Activated CD4-positive, alpha-beta T cell treated with anti-CD3 and anti-CD28 coated beads for 36 hours (primary cell): ENCODE measurements at regions of chr4 and their contacts with region 1.

Region 1: GRCh38 chr4:101187841-101188240 is 159.5 kb downstream of the PPP3CA start:
- DNase-seq: no peak
- ATAC-seq: no peak
- H3K4me3 Mint-ChIP-seq: no peak overlapping the region
- H3K27ac Mint-ChIP-seq: no peak overlapping the region
- H3K4me1 Mint-ChIP-seq: peaks cover 8% of the 10 kb centered on the region
- H3K27me3 Mint-ChIP-seq: no peaks in the 10 kb centered on the region

Region 2: DNA sequence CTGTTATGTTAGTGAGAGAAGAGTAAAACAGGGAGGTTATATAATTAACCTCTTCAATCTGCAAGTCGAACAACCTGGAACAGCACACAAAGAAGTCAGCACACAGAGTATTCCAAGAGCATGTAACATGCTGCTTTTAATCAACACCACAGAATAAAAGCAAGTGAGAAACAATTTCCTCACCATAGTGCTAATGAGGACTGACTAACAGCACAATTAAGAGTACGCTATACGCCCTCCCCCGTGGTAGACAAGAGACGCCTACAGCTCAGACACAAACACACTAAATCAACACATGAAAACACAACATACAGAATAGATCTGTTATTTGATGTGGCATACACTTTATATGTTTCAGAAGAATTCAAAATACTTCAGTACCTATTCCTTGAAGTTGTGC is 56.5 kb after region 1 on chr4:
- CTCF ChIA-PET with region 1: no interaction called
- POLR2A ChIA-PET with region 1: no interaction called
- intact Hi-C with region 1: no loop called
- DNase-seq: no peak
- ATAC-seq: no peak
- H3K4me3 Mint-ChIP-seq: no peak overlapping the region
- H3K27ac Mint-ChIP-seq: no peak overlapping the region
- H3K4me1 Mint-ChIP-seq: peaks cover 3% of the 10 kb centered on the region
- H3K27me3 Mint-ChIP-seq: no peaks in the 10 kb centered on the region

Region 3: GRCh38 chr4:101730291-101731117 is 542.7 kb after region 1 on chr4:
- CTCF ChIA-PET with region 1: interaction called, 5 read pairs
- POLR2A ChIA-PET with region 1: no interaction called
- intact Hi-C with region 1: loop called (anchors 5 kb)
- DNase-seq: peak; percentile 74
- ATAC-seq: peak; percentile 83
- H3K4me3 Mint-ChIP-seq: no peak overlapping the region
- H3K27ac Mint-ChIP-seq: no peak overlapping the region
- H3K4me1 Mint-ChIP-seq: no peaks in the 10 kb centered on the region
- H3K27me3 Mint-ChIP-seq: peaks cover 3% of the 10 kb centered on the region